Prostate gland (tissue), 2 donors: ENCODE measurements at regions of chr1 and their contacts with region 1.

Region 1: GRCh38 chr1:107056426-107057196 is at the start of gene PRMT6:
- DNase-seq: peak; percentile 81
- H3K4me3 ChIP-seq: peak within 1 kb of the TSS; percentile 73 to 78
- H3K27ac ChIP-seq: peak within 1 kb of the TSS; percentile 85
- H3K4me1 ChIP-seq: no peaks in the 10 kb centered on the region
- H3K27me3 ChIP-seq: no peaks in the 10 kb centered on the region
- CTCF ChIP-seq: peak in 1 of 4 experiments; percentile 1
- POLR2A ChIP-seq: peak; percentile 55
- total RNA-seq, gene PRMT6: 19.9 to 20.4 TPM

Region 2: DNA sequence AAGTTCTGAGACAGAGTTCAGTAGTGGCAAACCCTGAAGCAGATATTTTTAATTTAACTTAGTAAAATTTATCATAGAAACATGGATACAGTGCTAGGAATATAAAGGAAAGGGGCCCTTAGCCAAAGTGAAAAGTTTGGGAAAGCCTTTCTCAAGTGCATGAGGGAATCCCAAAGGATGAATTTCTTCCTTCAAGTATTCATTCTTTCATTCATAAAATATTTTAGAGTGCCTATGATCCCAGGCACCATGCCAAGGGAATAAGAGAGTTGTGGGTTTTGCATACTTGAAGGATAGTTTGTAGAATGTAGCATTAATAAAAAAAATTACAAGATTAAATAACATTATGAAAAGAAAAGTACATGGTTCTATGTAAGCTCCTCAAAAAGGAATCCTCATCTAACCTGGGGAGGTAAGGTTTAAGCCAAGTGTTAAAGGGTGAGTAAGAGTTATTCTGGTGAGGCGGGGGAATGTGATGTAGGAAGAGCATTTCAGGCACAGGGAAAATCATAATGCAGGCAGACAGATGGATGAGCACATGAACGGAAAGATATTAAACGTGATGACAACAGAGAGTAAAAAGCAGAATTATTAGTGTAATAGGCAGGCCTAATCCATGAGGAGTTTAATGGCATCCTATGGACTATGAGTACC is 43.8 kb after region 1 on chr1:
- intact Hi-C with region 1: no loop called
- DNase-seq: no peak
- H3K4me3 ChIP-seq: no peak overlapping the region
- H3K27ac ChIP-seq: no peak overlapping the region
- H3K4me1 ChIP-seq: no peaks in the 10 kb centered on the region
- H3K27me3 ChIP-seq: no peaks in the 10 kb centered on the region
- CTCF ChIP-seq: no peak
- POLR2A ChIP-seq: no peak

Region 3: GRCh38 chr1:107142140-107142542 is 85.5 kb after region 1 on chr1:
- intact Hi-C with region 1: loop called (anchors 5 kb)
- DNase-seq: peak; percentile 9
- H3K4me3 ChIP-seq: peak overlapping the region; percentile 44 to 47
- H3K27ac ChIP-seq: no peak overlapping the region
- H3K4me1 ChIP-seq: no peaks in the 10 kb centered on the region
- H3K27me3 ChIP-seq: no peaks in the 10 kb centered on the region
- CTCF ChIP-seq: peak; percentile 43 to 66 (median 50)
- POLR2A ChIP-seq: no peak

Region 4: DNA sequence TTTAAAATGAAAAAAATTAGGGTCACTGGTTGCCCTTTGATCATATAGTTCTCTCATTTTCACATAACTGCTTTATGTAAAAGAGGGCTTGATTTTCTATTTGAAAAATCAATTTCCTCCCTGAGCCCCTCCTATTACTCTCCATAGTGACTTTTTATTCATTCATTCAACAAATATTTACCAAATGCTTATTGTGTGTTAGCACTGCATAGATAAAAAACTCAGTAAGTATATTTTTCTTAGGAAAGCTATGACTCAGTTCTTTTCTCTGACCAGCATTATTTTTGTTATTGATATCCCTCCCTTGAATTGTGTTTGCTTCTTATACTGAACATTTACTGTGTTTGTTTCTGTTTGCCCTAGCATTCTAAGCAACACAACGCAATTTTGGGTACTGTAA is 144.0 kb after region 1 on chr1:
- intact Hi-C with region 1: no loop called
- DNase-seq: no peak
- H3K4me3 ChIP-seq: no peak overlapping the region
- H3K27ac ChIP-seq: no peak overlapping the region
- H3K4me1 ChIP-seq: no peaks in the 10 kb centered on the region
- H3K27me3 ChIP-seq: no peaks in the 10 kb centered on the region
- CTCF ChIP-seq: no peak
- POLR2A ChIP-seq: no peak

Region 5: DNA sequence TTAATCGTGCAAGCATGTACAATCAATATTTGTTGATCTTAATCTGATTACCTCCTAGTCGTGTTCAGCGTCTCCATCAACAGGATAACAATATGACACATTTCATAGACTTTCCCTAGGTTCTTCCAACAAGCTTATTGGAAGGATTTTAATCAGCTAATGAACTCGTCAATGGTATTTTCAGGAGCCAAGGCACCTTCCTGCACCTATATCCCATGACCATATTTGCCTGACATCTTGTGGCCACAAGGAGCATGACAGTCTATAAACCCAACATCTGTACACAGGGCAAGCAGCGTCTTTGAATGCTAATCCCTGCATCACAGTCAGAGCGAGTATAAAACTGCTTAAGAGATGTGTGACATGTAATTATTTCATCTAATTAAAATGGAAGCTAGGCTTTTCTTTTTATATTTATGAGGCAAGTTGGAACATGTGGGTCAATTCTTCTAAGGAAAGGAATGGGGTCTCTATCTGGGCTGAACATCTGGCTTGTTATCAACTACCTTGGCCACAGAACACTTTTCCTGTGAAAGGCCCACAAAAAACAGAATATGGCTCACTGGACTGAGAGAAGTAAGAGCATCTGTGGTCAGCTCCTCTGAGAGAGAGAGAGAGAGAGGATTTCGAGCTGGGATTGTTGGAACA is 473.0 kb after region 1 on chr1:
- intact Hi-C with region 1: loop called (anchors 5 kb)
- DNase-seq: peak; percentile 68
- H3K4me3 ChIP-seq: no peak overlapping the region
- H3K27ac ChIP-seq: peak overlapping the region; percentile 8 to 29
- H3K4me1 ChIP-seq: no peaks in the 10 kb centered on the region
- H3K27me3 ChIP-seq: no peaks in the 10 kb centered on the region
- CTCF ChIP-seq: peak in 3 of 4 experiments; percentile 75 to 87 (median 82)
- POLR2A ChIP-seq: no peak